CD8-positive, alpha-beta T cell (primary cell): ENCODE measurements at regions of chr1 and their contacts with region 1.

Region 1: GRCh38 chr1:201709564-201710295 is 119.2 kb upstream of the IPO9 start:
- DNase-seq: peak; percentile 21 to 71 (median 56)
- ATAC-seq: peak; percentile 82
- H3K4me3 ChIP-seq: no peak overlapping the region
- H3K4me3 Mint-ChIP-seq: no peak overlapping the region
- H3K27ac ChIP-seq: no peak overlapping the region
- H3K27ac Mint-ChIP-seq: no peak overlapping the region
- H3K4me1 ChIP-seq: no peaks in the 10 kb centered on the region
- H3K4me1 Mint-ChIP-seq: no peaks in the 10 kb centered on the region
- H3K27me3 ChIP-seq: no peaks in the 10 kb centered on the region
- H3K27me3 Mint-ChIP-seq: no peaks in the 10 kb centered on the region
- CTCF ChIP-seq: peak; percentile 64

Region 2: DNA sequence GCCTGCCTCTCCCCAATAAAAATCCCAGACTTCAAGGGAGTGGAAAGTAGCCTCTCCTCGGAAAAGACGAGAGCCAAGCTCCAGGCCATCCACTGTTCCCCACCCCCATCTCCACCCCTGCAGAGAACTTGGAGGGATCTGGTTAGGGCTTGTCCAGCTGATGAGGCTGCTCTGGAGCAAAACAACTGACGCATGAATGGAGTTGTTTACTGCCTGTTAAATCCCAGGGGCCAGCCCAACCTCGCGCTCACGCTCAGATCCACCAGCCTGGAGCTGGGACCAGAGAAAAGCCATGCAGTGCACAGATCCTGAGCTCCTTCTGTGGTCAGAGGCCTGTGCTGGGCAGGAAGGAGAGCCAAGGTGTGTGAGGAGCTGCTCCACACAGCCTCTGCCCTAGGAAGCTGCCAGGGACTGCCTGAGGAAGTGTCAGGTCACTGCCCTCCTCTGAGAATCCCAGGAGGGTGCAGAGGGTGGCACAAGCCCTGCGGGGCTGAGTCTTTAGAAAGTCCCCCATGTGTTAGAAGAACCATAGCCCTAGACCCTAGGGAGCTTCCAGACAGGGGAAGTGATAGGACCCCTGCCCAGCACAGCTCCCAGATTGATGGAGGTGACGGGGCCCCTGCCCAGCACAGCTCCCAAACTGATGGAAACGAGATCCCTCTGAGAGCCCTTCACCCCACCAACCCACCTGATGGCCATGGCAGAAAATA is 10.2 kb after region 1 on chr1:
- CTCF ChIA-PET with region 1: interaction called, 12 read pairs
- POLR2A ChIA-PET with region 1: no interaction called
- intact Hi-C with region 1: no loop called
- DNase-seq: no peak
- ATAC-seq: no peak
- H3K4me3 ChIP-seq: no peak overlapping the region
- H3K4me3 Mint-ChIP-seq: no peak overlapping the region
- H3K27ac ChIP-seq: no peak overlapping the region
- H3K27ac Mint-ChIP-seq: no peak overlapping the region
- H3K4me1 ChIP-seq: no peaks in the 10 kb centered on the region
- H3K4me1 Mint-ChIP-seq: no peaks in the 10 kb centered on the region
- H3K27me3 ChIP-seq: no peaks in the 10 kb centered on the region
- H3K27me3 Mint-ChIP-seq: peaks cover 6% of the 10 kb centered on the region
- CTCF ChIP-seq: no peak

Region 3: DNA sequence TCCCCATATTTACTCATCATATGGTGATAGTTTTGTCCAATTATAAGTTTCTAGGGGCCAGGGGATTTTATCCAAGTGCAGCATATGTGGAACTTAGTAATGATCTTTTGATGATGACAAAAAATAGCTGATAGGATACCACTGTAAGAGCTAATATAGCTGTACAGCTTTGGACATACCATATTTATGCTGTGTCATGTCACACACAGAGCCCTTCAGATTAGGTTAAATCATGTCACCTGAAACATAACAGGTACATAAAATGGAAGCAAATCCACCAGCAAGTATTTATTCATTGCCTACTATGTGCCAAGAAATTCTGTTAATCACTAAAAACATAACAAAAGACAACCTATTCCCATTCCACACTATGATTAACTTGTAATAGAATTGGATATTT is 36.4 kb after region 1 on chr1:
- CTCF ChIA-PET with region 1: no interaction called
- POLR2A ChIA-PET with region 1: no interaction called
- intact Hi-C with region 1: no loop called
- DNase-seq: no peak
- ATAC-seq: no peak
- H3K4me3 ChIP-seq: no peak overlapping the region
- H3K4me3 Mint-ChIP-seq: no peak overlapping the region
- H3K27ac ChIP-seq: no peak overlapping the region
- H3K27ac Mint-ChIP-seq: no peak overlapping the region
- H3K4me1 ChIP-seq: no peaks in the 10 kb centered on the region
- H3K4me1 Mint-ChIP-seq: peaks cover 6% of the 10 kb centered on the region
- H3K27me3 ChIP-seq: no peaks in the 10 kb centered on the region
- H3K27me3 Mint-ChIP-seq: peaks cover 2% of the 10 kb centered on the region
- CTCF ChIP-seq: no peak

Region 4: GRCh38 chr1:201792534-201793305 is 83.0 kb after region 1 on chr1:
- CTCF ChIA-PET with region 1: interaction called, 151 read pairs
- POLR2A ChIA-PET with region 1: no interaction called
- intact Hi-C with region 1: loop called (anchors 1 kb)
- DNase-seq: peak in 8 of 9 experiments; percentile 6 to 62 (median 48)
- ATAC-seq: peak; percentile 46
- H3K4me3 ChIP-seq: no peak overlapping the region
- H3K4me3 Mint-ChIP-seq: no peak overlapping the region
- H3K27ac ChIP-seq: no peak overlapping the region
- H3K27ac Mint-ChIP-seq: no peak overlapping the region
- H3K4me1 ChIP-seq: no peaks in the 10 kb centered on the region
- H3K4me1 Mint-ChIP-seq: no peaks in the 10 kb centered on the region
- H3K27me3 ChIP-seq: no peaks in the 10 kb centered on the region
- H3K27me3 Mint-ChIP-seq: no peaks in the 10 kb centered on the region
- CTCF ChIP-seq: peak; percentile 89

Region 5: GRCh38 chr1:201970334-201971159 is 260.8 kb after region 1 on chr1:
- CTCF ChIA-PET with region 1: interaction called, 6 read pairs
- POLR2A ChIA-PET with region 1: no interaction called
- intact Hi-C with region 1: loop called in 1 of 2 experiments (anchors 5 kb)
- DNase-seq: no peak
- ATAC-seq: no peak
- H3K4me3 ChIP-seq: no peak overlapping the region
- H3K4me3 Mint-ChIP-seq: no peak overlapping the region
- H3K27ac ChIP-seq: no peak overlapping the region
- H3K27ac Mint-ChIP-seq: no peak overlapping the region
- H3K4me1 ChIP-seq: no peaks in the 10 kb centered on the region
- H3K4me1 Mint-ChIP-seq: peaks cover 4% of the 10 kb centered on the region
- H3K27me3 ChIP-seq: no peaks in the 10 kb centered on the region
- H3K27me3 Mint-ChIP-seq: no peaks in the 10 kb centered on the region
- CTCF ChIP-seq: no peak